Activated T-helper 1 cell treated with anti-CD3 and anti-CD28 coated beads, Interleukin-12 subunit alpha, Interleukin-12 subunit beta, Interleukin-2, Interleukin-4 antibody, amounts not matched to agents 30 ng/mL and 10 ng/mL and 1 ng/mL, durations not matched to agents 14 hours and 24 hours and 36 hours (primary cell): ENCODE measurements at regions of chr5 and their contacts with region 1.

Region 1: DNA sequence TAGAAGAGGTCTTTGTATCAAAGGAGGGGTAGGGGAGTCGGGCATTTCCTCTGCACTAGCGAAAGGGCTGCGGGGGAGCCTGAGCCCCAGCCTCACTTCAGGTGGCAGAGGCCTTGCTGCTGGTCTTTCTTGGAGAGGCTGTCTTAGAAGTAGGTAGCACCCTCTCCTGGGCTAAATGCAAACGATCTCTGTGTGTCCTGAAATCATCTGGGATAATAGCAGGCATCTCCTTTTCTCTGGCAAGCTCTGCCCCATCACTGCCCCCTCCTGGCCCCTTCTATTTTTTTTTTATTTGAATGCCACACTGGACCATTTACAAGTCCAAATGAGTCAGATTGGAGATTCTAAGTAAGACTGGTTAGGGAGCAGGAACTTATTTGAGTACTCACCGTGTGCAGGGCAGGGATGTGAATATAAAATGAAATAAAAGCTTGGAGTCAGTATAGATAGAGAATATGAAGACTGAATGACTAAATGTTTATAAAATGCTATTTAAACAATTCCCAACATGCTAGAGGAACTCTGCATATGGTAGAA is 137.1 kb downstream of the FGF1 start:
- DNase-seq: no peak
- H3K4me3 Mint-ChIP-seq: no peak overlapping the region
- H3K27ac Mint-ChIP-seq: no peak overlapping the region
- H3K4me1 Mint-ChIP-seq: peaks cover 6% of the 10 kb centered on the region
- H3K27me3 Mint-ChIP-seq: peaks cover 37% of the 10 kb centered on the region

Region 2: DNA sequence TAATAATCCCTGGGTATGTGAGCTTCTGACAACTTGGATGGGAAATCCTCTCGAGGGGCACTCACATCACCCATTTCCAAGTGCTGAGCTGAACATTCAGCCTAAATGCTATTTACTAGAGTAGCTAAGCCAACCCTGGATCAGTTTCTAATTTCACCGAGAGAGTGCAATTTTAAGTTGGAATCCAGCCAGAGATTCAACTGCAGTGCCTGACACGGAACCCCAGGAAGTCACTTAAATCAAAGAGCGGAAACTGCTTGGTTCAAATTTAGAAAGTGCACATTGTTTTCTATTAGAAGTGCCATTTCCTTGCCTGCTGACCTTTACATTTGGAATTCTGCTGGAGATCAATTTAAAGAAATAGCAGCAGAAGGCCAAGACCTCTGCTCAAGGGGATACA is 232.8 kb before region 1 on chr5:
- intact Hi-C with region 1: loop called (anchors 5 kb)
- DNase-seq: no peak
- H3K4me3 Mint-ChIP-seq: no peak overlapping the region
- H3K27ac Mint-ChIP-seq: no peak overlapping the region
- H3K4me1 Mint-ChIP-seq: peaks cover 39% of the 10 kb centered on the region
- H3K27me3 Mint-ChIP-seq: peaks cover 5% of the 10 kb centered on the region

Region 3: GRCh38 chr5:142600611-142601358 is 52.0 kb after region 1 on chr5:
- intact Hi-C with region 1: no loop called
- DNase-seq: no peak
- H3K4me3 Mint-ChIP-seq: no peak overlapping the region
- H3K27ac Mint-ChIP-seq: no peak overlapping the region
- H3K4me1 Mint-ChIP-seq: no peaks in the 10 kb centered on the region
- H3K27me3 Mint-ChIP-seq: peaks cover 8% of the 10 kb centered on the region